ENCODE measurements at regions of chr11 and their contacts with region 1.

Region 1: DNA sequence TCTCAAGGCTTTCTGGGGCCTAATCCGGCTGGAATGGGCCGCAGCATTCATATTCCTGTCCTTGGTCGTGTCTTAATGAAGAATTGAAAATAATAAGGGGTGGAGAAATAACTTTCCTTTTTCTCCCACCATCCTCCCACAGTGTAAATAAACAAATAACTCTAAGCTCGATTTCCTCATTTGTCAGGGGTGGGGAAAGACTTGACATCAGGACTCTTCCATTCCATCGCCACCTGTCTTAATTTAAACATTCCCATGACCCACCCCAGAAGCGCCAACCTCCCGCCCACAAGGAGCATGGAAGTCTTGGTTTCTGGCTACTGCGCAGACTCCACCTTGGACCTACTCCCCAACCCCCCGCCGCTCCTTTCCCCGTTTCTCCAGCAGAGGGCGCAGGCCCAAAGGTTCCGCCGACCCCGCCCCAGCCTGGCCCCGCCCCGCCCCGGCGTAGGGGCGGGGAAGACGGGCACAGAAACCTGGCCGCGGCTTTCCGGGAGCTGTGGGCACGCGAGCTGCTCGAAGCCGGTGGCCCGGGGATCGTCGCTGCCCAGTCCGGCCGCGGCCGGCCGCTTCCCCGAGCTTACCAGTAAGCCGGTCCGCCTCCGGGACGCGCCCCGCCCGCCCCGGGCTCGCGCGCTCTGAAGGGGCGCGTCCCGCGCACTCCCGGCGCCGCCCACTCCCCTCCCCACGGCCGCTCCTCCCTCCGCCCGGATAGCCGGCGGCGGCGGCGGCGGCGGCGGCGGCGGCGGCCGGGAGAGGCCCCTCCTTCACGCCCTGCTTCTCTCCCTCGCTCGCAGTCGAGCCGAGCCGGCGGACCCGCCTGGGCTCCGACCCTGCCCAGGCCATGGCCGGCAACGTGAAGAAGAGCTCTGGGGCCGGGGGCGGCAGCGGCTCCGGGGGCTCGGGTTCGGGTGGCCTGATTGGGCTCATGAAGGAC is at the start of gene CBL:
- DNase-seq: peak; percentile 99
- ATAC-seq: peak; percentile 98
- total RNA-seq, gene CBL: 31.1 TPM

Region 2: DNA sequence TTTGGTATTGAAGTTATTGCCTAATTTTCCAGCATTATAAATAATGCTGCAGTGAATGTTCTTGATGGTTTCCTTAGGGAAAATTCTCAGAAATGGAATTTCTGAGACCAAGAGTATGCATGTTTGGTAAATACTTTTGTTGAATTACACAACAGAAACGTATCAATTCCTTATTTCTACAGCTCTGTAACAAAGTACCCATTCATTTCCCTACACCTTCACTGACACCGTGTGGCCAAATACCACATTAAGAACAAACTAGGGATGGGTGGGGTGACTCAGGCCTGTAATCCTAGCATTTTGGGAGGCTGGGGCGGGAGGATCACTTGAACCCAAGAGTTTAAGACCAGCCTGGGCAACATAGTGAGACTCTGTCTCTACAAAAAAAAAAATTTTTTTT is 89.3 kb after region 1 on chr11:
- intact Hi-C with region 1: loop called (anchors 10 kb)
- DNase-seq: no peak
- ATAC-seq: no peak

Measured in sciatic nerve (tissue), 2 donors.